Activated CD8-positive, alpha-beta T cell treated with anti-CD3 and anti-CD28 coated beads, Interleukin-2, amount 10 ng/mL, durations not matched to agents 7 days and 5 days (primary cell): ENCODE measurements at regions of chr14 and their contacts with region 1.

Region 1: DNA sequence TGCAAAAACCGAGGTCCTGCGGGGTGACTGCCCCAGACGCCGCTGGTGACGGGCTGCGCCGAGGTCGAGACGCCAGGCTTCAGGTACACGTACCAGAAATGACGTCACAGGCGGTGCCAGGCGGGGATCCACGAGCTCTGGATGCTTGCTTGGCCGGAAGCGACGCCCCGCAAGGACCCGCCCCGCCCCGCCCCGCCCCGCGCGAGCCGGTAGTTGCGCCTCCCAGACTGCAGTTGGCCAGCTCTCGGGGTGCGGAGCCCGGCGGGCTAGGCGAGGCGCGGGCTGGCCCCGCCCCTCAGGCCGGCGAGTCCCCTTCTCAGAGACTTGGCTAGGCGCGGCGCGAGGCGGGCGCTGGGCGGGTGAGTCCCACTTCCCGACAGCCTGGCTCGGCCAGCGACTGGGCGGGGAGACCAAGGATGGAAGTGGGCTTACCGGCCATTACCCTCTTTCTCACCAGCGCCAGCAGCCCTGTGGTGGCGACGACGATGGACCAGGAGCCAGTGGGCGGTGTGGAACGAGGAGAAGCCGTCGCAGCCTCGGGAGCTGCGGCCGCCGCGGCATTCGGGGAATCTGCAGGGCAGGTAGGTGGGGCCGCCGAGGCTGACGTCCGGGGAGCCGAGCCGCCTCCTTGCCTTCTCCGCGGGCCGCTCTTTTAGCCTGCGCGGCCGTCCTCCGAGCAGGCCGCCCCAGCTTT is at the start of gene FAM177A1:
- DNase-seq: peak; percentile 99
- ATAC-seq: peak; percentile 96
- H3K4me3 Mint-ChIP-seq: peak within 1 kb of the TSS; percentile 95
- H3K27ac Mint-ChIP-seq: peak within 1 kb of the TSS; percentile 99
- H3K4me1 Mint-ChIP-seq: peaks cover 36% of the 10 kb centered on the region
- H3K27me3 Mint-ChIP-seq: no peaks in the 10 kb centered on the region
- total RNA-seq, gene FAM177A1: 40.5 to 41.5 TPM

Region 2: GRCh38 chr14:34875031-34875922 is 170.9 kb before region 1 on chr14 and contains the start of gene BAZ1A:
- CTCF ChIA-PET with region 1: interaction called, 4 read pairs
- POLR2A ChIA-PET with region 1: interaction called, 11 read pairs
- DNase-seq: peak; percentile 39
- ATAC-seq: peak; percentile 43
- H3K4me3 Mint-ChIP-seq: peak within 1 kb of the TSS; percentile 100
- H3K27ac Mint-ChIP-seq: peak within 1 kb of the TSS; percentile 99
- H3K4me1 Mint-ChIP-seq: peaks cover 37% of the 10 kb centered on the region
- H3K27me3 Mint-ChIP-seq: no peaks in the 10 kb centered on the region
- total RNA-seq, gene BAZ1A: 52.7 to 54.2 TPM

Region 3: GRCh38 chr14:35121887-35122695 is 75.9 kb after region 1 on chr14 and contains the starts of genes PPP2R3C and PRORP:
- CTCF ChIA-PET with region 1: interaction called, 3 read pairs
- POLR2A ChIA-PET with region 1: interaction called, 21 read pairs
- DNase-seq: peak; percentile 96
- ATAC-seq: peak; percentile 90
- H3K4me3 Mint-ChIP-seq: peak within 1 kb of the TSS; percentile 98
- H3K27ac Mint-ChIP-seq: peak within 1 kb of the TSS; percentile 99
- H3K4me1 Mint-ChIP-seq: peaks cover 55% of the 10 kb centered on the region
- H3K27me3 Mint-ChIP-seq: no peaks in the 10 kb centered on the region
- total RNA-seq, gene PPP2R3C: 33.3 to 38.6 TPM
- total RNA-seq, gene PRORP: 32.5 to 35.4 TPM

Region 4: DNA sequence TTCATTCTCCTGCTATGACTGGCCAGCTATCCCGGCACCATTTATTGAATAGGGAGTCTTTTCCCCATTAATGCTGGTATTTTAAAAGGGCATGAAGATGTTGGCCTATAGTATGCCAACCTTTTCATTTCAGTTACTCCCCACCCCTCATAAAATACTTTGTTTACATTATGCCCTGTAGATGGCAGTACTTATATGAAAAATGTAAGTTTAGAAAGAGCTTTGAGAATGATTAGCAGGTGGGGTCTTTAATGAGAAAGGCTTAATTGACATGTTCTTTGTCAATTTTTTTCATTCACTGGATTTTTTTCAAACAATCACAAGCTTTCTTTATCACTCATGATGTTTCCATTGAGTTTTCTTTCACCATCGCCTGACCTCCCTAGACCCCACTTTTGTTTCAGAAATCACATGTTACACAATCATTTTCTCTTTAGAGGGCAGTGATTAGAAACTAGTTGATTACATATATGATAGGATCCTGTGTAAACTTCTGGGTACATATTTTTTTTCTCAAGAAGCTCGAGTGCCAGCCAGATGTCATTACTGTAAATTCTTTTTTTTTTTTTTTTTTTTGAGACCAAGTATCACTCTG is 183.4 kb after region 1 on chr14:
- CTCF ChIA-PET with region 1: no interaction called
- POLR2A ChIA-PET with region 1: no interaction called
- DNase-seq: no peak
- ATAC-seq: no peak
- H3K4me3 Mint-ChIP-seq: no peak overlapping the region
- H3K27ac Mint-ChIP-seq: no peak overlapping the region
- H3K4me1 Mint-ChIP-seq: peaks cover 21% of the 10 kb centered on the region
- H3K27me3 Mint-ChIP-seq: no peaks in the 10 kb centered on the region

Region 5: DNA sequence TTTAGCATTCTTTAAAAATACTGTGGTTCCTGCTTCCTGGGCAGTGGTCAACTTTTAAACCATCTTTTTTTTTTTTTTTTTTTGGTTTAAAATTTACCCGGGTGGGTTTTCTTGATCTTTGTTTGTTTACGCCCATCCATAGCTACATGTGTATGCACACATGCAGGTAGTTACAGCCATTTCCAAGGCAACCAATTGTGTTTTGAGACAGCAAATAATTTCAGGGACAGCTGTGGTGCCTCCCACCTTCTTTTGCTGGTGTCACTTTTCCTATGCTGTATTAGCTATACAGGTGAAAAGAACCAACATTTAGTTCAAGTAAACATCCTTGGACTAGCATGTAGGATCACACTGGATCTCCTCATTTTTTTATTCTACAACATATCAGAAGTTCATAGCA is 194.0 kb after region 1 on chr14:
- CTCF ChIA-PET with region 1: no interaction called
- POLR2A ChIA-PET with region 1: no interaction called
- DNase-seq: no peak
- ATAC-seq: peak; percentile 63
- H3K4me3 Mint-ChIP-seq: no peak overlapping the region
- H3K27ac Mint-ChIP-seq: no peak overlapping the region
- H3K4me1 Mint-ChIP-seq: peaks cover 6% of the 10 kb centered on the region
- H3K27me3 Mint-ChIP-seq: no peaks in the 10 kb centered on the region